ENCODE measurements at regions of chr9 and their contacts with region 1.

Region 1: DNA sequence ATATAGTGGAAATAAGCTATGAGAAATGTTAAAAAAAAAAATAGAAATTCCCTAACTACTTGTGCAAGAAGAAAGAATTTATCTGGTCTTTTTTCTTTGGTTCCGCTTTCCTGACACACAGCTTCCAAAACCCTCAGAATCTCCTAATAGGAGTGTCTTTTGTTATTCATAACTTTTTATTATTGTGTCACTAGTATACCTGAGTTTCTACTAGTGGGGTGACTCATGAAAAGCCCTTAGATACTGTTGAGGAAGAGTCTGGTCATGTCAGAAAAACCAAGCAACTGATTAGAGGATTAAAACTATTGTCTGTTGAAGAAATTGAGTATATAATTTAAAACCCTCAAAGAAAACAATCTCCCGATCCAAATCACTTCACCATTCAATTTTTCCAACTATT is 152.8 kb upstream of the IFNE start:
- DNase-seq: no peak
- ATAC-seq: no peak
- H3K4me3 ChIP-seq: no peak overlapping the region
- H3K4me3 Mint-ChIP-seq: no peak overlapping the region
- H3K27ac ChIP-seq: no peak overlapping the region
- H3K27ac Mint-ChIP-seq: no peak overlapping the region
- H3K4me1 ChIP-seq: no peaks in the 10 kb centered on the region
- H3K4me1 Mint-ChIP-seq: no peaks in the 10 kb centered on the region
- H3K27me3 ChIP-seq: no peaks in the 10 kb centered on the region
- H3K27me3 Mint-ChIP-seq: peaks cover 0 to 3% of the 10 kb centered on the region in 2 donors

Region 2: GRCh38 chr9:21465859-21466518 is 169.0 kb before region 1 on chr9:
- CTCF ChIA-PET with region 1: no interaction called
- POLR2A ChIA-PET with region 1: no interaction called
- DNase-seq: peak in 2 of 35 experiments; percentile 21 to 74
- ATAC-seq: peak in 3 of 4 experiments; percentile 53 to 73 (median 72)
- H3K4me3 ChIP-seq: no peak overlapping the region
- H3K4me3 Mint-ChIP-seq: no peak overlapping the region
- H3K27ac ChIP-seq: no peak overlapping the region
- H3K27ac Mint-ChIP-seq: no peak overlapping the region
- H3K4me1 ChIP-seq: no peaks in the 10 kb centered on the region
- H3K4me1 Mint-ChIP-seq: peaks cover 0 to 2% (median 0%) of the 10 kb centered on the region in 3 donors
- H3K27me3 ChIP-seq: peaks cover 0 to 6% of the 10 kb centered on the region in 2 experiments
- H3K27me3 Mint-ChIP-seq: peaks cover 4 to 9% of the 10 kb centered on the region in 2 donors

Region 3: DNA sequence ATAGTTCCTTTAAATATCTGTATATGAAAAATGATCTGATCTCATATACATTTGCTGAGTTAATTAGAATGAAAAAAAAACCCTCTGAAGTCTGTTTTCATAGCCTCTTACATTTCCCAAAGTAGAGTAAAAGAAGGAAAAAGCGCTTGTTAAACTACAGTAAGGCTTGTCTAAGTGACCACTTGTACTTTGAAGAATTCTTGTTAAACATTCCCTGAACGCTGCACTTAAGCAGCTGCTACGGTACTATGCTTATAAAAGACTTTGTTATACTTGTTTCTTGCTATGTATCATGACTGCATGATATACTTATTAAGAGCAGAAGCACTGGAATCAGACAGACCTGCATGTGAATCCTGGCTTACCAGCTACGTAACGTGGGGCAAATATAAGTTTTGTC is 85.8 kb after region 1 on chr9:
- CTCF ChIA-PET with region 1: no interaction called
- POLR2A ChIA-PET with region 1: no interaction called
- DNase-seq: no peak
- ATAC-seq: no peak
- H3K4me3 ChIP-seq: no peak overlapping the region
- H3K4me3 Mint-ChIP-seq: no peak overlapping the region
- H3K27ac ChIP-seq: no peak overlapping the region
- H3K27ac Mint-ChIP-seq: no peak overlapping the region
- H3K4me1 ChIP-seq: no peaks in the 10 kb centered on the region
- H3K4me1 Mint-ChIP-seq: no peaks in the 10 kb centered on the region
- H3K27me3 ChIP-seq: no peaks in the 10 kb centered on the region
- H3K27me3 Mint-ChIP-seq: peaks cover 11 to 31% of the 10 kb centered on the region in 2 donors

Region 4: DNA sequence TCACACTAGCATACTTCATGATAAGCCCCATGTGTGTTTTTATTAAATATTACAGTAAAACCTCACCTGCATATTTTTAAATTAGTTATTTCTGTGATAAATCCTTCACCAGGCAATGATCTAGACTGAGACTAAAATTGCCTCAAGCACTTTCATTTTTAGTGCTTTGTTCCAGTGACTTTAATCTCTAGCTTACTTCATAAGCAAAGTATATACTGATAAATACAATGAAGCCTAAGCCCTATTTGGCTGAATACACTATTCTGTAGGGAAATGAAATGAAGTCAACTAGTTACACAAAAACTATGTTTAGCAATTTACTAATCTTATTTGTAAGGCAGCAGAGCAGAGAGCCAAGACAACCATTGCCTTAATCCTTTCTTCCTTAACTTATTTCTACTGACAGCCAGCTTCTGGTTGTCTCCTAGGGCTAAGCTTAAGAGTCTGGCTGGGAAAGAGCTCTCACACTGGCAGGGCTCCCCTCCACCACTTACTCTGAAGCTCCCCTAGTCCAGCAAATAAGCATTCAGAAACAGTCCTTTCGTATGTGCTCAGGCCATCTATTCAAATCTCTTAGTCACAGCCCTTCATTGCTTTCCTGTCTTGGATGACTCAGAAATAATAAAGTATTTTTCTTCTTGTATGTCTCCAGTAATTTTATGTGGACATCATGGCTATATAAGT is 136.1 kb after region 1 on chr9:
- CTCF ChIA-PET with region 1: interaction called in 1 of 2 experiments, 16 read pairs
- POLR2A ChIA-PET with region 1: no interaction called
- DNase-seq: no peak
- ATAC-seq: no peak
- H3K4me3 ChIP-seq: no peak overlapping the region
- H3K4me3 Mint-ChIP-seq: no peak overlapping the region
- H3K27ac ChIP-seq: no peak overlapping the region
- H3K27ac Mint-ChIP-seq: peak overlapping the region in 1 of 2 donors; percentile 19
- H3K4me1 ChIP-seq: no peaks in the 10 kb centered on the region
- H3K4me1 Mint-ChIP-seq: peaks cover 8 to 12% (median 12%) of the 10 kb centered on the region in 3 donors
- H3K27me3 ChIP-seq: no peaks in the 10 kb centered on the region
- H3K27me3 Mint-ChIP-seq: no peaks in the 10 kb centered on the region

Measured in T-cell (primary cell).